ENCODE measurements at regions of chr10 and their contacts with region 1.

Region 1: GRCh38 chr10:87531908-87532622 is 27.4 kb downstream of the MINPP1 start:
- DNase-seq: no peak
- ATAC-seq: no peak
- H3K4me3 ChIP-seq: no peak overlapping the region
- H3K27ac ChIP-seq: no peak overlapping the region
- H3K4me1 ChIP-seq: no peaks in the 10 kb centered on the region
- H3K27me3 ChIP-seq: no peaks in the 10 kb centered on the region
- CTCF ChIP-seq: no peak
- EP300 ChIP-seq: no peak
- POLR2A ChIP-seq: no peak
- RAD21 ChIP-seq: no peak

Region 2: GRCh38 chr10:87562750-87563149 is 30.7 kb after region 1 on chr10:
- CTCF ChIA-PET with region 1: no interaction called
- POLR2A ChIA-PET with region 1: no interaction called
- in situ Hi-C with region 1: no loop called
- intact Hi-C with region 1: no loop called
- DNase-seq: no peak
- ATAC-seq: no peak
- H3K4me3 ChIP-seq: no peak overlapping the region
- H3K27ac ChIP-seq: no peak overlapping the region
- H3K4me1 ChIP-seq: peaks cover 36% of the 10 kb centered on the region
- H3K27me3 ChIP-seq: no peaks in the 10 kb centered on the region
- CTCF ChIP-seq: no peak
- EP300 ChIP-seq: no peak
- POLR2A ChIP-seq: no peak
- RAD21 ChIP-seq: no peak

Region 3: DNA sequence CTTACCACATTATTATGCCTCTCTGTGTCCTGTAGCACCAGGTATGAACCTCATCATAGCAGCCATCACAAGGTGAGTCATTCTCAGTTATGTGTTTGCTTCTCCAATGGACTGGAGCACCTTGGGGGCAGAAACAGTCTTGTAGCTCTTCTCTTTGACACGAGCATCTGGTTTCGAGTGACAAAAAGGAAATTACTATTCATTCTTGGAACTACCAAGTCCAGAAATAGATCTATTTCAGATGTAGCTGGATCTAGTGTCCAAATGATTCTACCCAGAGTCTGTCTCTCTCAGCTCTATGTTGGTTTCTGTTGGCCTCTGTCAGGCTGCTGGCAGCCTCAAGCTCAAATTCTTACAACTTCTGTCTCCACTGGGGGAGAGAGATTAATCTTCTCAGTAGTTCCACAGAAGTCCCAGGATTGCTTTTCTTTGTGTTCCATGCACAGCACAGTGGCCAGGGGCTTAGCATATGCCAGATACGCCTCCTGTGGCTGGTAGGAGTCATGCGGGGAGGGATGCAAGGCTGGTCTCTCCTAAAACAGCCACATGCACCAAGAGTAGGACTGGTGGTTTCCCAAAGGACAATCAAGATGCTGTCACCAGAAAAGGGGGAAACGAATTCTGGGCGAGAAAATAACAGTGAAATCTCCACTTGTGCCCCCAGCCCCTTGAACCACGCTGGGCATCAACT is 90.4 kb after region 1 on chr10:
- CTCF ChIA-PET with region 1: no interaction called
- POLR2A ChIA-PET with region 1: no interaction called
- in situ Hi-C with region 1: no loop called
- intact Hi-C with region 1: loop called (anchors 10 kb)
- DNase-seq: no peak
- ATAC-seq: peak; percentile 47
- H3K4me3 ChIP-seq: no peak overlapping the region
- H3K27ac ChIP-seq: no peak overlapping the region
- H3K4me1 ChIP-seq: peaks cover 40% of the 10 kb centered on the region
- H3K27me3 ChIP-seq: no peaks in the 10 kb centered on the region; a peak in 1 of 5 replicates
- CTCF ChIP-seq: peak; percentile 27
- EP300 ChIP-seq: no peak
- POLR2A ChIP-seq: no peak
- RAD21 ChIP-seq: no peak

Region 4: GRCh38 chr10:87659571-87660483 is 127.8 kb after region 1 on chr10 and contains the start of gene PAPSS2:
- CTCF ChIA-PET with region 1: interaction called, 7 read pairs
- POLR2A ChIA-PET with region 1: no interaction called
- in situ Hi-C with region 1: no loop called
- intact Hi-C with region 1: loop called (anchors 2 kb)
- DNase-seq: no peak
- ATAC-seq: peak; percentile 75
- H3K4me3 ChIP-seq: peak within 1 kb of the TSS; percentile 61 to 70 (median 64)
- H3K27ac ChIP-seq: no peak within 1 kb of the TSS
- H3K4me1 ChIP-seq: peaks cover 27% of the 10 kb centered on the region
- H3K27me3 ChIP-seq: peaks cover 5 to 31% of the 10 kb centered on the region in 2 experiments; a peak in 4 of 5 replicates
- CTCF ChIP-seq: no peak
- EP300 ChIP-seq: no peak
- POLR2A ChIP-seq: no peak
- RAD21 ChIP-seq: no peak
- total RNA-seq, gene PAPSS2: 0.11 and 0.17 TPM in 2 replicates

Region 5: DNA sequence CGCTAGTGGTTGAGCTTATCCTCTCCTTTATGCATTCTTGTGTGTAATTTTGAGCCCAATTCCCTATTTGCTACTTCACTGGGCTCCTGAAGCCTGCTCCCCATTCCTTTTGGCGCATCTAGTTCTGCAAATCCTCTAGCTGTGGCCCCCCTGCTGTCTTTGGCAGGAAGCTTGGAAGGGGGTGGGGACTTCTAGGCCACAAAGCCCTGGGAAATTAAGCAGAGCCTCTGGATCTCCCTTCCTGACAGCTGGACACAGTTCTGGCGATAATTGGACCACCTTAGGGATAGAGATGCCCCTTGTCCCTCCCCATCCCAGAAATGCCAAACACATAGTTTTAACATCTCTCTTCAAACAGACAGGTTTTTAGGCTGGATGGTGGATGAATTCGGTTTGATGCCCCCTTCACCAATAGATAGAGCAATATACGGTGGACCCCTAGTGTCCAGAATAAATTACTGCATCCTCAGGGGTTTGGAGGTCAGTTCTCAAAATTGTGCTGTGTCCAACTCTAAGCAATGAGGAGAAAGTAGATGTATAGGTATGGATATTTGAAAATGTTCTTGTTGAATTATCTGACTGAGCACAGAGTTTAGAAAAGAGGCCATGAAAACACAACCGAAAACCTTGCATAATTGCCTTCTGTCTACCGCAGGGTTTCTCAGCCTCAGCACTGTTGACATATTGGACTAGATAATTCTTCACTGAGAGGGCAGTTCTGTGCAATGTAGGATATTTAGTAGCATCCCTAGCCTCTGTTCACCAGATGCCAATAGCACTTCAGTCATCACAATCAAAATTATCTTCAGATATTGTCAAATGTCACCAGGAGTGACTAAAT is 203.1 kb after region 1 on chr10:
- CTCF ChIA-PET with region 1: interaction called, 15 read pairs
- POLR2A ChIA-PET with region 1: no interaction called
- in situ Hi-C with region 1: no loop called
- intact Hi-C with region 1: loop called (anchors 1 kb)
- DNase-seq: peak; percentile 25
- ATAC-seq: peak; percentile 92
- H3K4me3 ChIP-seq: no peak overlapping the region
- H3K27ac ChIP-seq: no peak overlapping the region
- H3K4me1 ChIP-seq: peaks cover 4% of the 10 kb centered on the region
- H3K27me3 ChIP-seq: no peaks in the 10 kb centered on the region; a peak in 1 of 5 replicates
- CTCF ChIP-seq: peak; percentile 78
- EP300 ChIP-seq: no peak
- POLR2A ChIP-seq: no peak
- RAD21 ChIP-seq: peak; percentile 48; the same call in 1 of the 2 replicates

Region 6: DNA sequence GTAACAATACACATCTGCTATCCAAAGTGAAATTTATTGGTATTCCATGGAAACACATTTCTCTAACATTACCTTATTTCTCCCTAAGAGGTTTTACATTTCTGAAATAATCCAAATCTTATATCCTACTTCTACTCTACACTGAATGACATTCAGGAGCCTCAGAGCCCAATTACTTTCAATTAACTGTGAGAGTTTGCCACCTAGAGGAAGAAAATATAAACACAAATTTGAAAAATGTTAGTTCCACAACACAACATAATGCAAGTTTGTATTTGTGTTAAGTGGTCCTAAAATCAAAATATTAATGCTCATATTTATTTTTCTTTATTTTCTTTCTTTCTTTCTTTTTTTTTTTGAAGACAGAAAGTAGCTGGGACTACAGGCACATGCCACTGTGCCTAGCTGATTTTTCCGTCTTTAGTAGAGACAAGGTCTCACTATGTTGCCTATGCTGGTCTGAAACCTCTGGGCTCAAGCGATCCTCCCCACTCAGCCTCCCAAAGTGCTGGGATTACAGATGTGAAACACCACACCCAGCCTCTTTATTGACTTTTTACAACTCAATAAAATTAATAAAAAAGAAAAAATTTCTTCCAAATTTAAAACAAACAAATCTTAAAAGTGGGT is 239.9 kb after region 1 on chr10:
- CTCF ChIA-PET with region 1: interaction called, 7 read pairs
- POLR2A ChIA-PET with region 1: no interaction called
- in situ Hi-C with region 1: no loop called
- intact Hi-C with region 1: loop called (anchors 1 kb)
- DNase-seq: peak; percentile 19
- ATAC-seq: peak; percentile 56
- H3K4me3 ChIP-seq: no peak overlapping the region
- H3K27ac ChIP-seq: no peak overlapping the region
- H3K4me1 ChIP-seq: no peaks in the 10 kb centered on the region
- H3K27me3 ChIP-seq: no peaks in the 10 kb centered on the region
- CTCF ChIP-seq: peak; percentile 51
- EP300 ChIP-seq: no peak
- POLR2A ChIP-seq: no peak
- RAD21 ChIP-seq: no peak

Measured in HepG2 (cell line).